ENCODE measurements at regions of chr1 and their contacts with region 1.

Region 1: DNA sequence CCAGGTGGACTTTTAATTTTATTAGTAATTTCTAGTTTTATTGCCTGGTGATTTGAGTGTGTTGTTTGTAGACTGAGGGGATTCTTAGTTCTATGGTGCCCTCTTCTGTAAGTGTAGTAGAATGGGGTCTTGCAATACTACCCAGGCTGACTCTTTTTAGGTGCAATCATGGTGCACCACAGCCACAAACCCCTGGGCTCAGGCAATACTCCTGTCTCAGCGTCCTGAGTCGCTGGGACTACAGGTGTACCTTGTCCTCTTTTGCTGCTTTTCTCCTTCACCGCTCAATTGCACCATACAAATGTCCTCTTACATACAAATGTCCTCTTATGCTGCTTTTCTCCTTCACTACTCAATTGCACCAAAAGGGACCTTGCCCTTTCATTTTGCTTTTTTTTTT is 43.1 kb downstream of the SCP2 start:
- DNase-seq: no peak
- H3K4me3 Mint-ChIP-seq: no peak overlapping the region
- H3K27ac Mint-ChIP-seq: no peak overlapping the region
- H3K4me1 Mint-ChIP-seq: no peaks in the 10 kb centered on the region
- H3K27me3 Mint-ChIP-seq: no peaks in the 10 kb centered on the region

Region 2: GRCh38 chr1:52798331-52798730 is 171.8 kb before region 1 on chr1:
- CTCF ChIA-PET with region 1: no interaction called
- intact Hi-C with region 1: no loop called
- DNase-seq: no peak
- H3K4me3 Mint-ChIP-seq: no peak overlapping the region
- H3K27ac Mint-ChIP-seq: no peak overlapping the region
- H3K4me1 Mint-ChIP-seq: no peaks in the 10 kb centered on the region
- H3K27me3 Mint-ChIP-seq: no peaks in the 10 kb centered on the region

Region 3: DNA sequence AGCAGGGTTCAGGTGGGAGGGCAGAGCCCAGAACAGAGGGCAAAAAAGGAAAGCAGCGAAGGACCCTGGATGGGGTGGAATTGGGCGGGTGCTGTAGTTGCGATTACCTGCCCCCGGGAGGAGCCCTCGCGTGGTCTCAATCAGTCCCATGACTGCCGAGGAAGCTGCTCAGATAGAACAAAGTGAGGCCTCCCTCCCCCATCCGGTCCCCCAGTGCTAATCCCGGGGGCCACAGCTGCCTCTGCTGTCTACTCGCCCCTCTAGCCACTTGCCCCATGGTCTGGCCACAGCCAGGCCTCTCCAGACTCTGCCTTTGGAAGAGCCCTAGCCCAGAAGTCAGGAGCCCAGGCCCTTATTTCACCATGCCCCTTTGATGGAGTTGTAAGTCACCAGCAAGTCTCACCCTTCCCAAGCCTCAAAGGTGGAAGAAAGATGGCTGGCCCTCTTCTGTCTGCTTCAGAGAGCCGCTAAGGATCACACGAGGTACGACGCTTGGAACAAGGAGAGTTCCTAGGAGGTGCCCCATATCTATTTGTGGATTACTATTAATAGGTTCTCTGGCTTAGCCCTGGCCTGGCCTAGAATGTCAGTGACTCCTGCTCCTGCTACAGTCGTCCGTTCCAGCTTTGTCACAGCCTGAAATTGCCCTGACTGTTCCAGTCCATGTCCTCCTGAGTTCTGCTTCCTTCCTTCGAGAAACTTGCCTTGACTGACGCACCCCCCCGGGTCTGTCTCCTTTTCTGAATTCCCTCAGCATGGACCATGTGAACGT is 65.0 kb before region 1 on chr1:
- CTCF ChIA-PET with region 1: no interaction called
- intact Hi-C with region 1: loop called (anchors 5 kb)
- DNase-seq: peak; percentile 45
- H3K4me3 Mint-ChIP-seq: no peak overlapping the region
- H3K27ac Mint-ChIP-seq: no peak overlapping the region
- H3K4me1 Mint-ChIP-seq: no peaks in the 10 kb centered on the region
- H3K27me3 Mint-ChIP-seq: no peaks in the 10 kb centered on the region

Measured in activated naive CD4-positive, alpha-beta T cell treated with anti-CD3 and anti-CD28 coated beads for 36 hours (primary cell).